Breast epithelium (tissue), 4 donors: ENCODE measurements at regions of chr1 and their contacts with region 1.

Region 1: DNA sequence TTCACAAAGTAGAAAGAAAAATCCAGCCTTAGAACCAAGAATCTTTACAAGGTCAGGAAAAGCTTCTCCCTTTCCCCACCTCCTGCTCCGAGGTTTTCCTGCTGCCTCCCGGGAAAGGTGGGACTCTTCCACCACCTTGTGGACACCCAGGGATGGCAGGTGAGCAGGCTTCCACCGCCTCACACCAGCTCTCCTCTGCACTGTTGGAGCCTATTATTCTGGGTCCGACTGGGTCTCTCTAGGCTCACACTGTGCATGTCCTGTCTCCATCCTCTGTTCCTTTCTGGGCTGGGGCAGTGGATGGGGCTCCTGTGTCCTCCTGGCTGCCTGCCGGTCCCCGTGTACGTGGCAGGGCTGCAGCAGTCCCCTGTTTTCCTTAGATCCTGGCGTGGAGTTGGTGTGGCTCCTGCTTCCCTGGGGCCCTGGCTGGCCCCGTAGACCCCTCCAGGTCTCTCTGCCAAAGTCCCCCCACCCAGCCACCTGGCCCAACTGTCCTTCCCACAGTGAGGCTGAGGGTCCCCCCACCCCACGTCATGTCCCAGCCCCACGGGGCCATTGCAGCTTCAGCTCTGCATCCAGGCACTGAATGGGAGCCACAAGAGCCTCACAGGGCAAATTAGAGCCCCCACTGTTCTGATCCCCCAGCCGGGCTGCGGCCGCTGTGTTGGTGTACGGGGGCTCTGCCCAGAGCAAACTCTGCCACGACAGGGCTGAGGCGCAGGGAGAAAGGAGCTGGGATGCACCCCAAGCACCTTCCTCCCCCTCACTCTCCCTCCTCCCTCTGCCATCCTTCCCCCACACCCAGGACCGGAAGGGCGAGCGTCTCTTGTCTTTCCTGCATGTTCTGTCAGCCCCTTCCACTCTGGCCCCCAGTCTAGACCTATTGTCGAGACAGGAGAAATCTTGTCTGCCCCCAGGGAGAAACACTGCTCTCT is 3.3 kb upstream of the SLC45A1 start:
- DNase-seq: peak; percentile 80 to 84
- H3K4me3 ChIP-seq: no peak overlapping the region
- H3K27ac ChIP-seq: no peak overlapping the region
- H3K4me1 ChIP-seq: peaks cover 3 to 4% of the 10 kb centered on the region in 2 donors
- H3K27me3 ChIP-seq: no peaks in the 10 kb centered on the region
- CTCF ChIP-seq: peak; percentile 87 to 98 (median 96)
- POLR2A ChIP-seq: no peak

Region 2: DNA sequence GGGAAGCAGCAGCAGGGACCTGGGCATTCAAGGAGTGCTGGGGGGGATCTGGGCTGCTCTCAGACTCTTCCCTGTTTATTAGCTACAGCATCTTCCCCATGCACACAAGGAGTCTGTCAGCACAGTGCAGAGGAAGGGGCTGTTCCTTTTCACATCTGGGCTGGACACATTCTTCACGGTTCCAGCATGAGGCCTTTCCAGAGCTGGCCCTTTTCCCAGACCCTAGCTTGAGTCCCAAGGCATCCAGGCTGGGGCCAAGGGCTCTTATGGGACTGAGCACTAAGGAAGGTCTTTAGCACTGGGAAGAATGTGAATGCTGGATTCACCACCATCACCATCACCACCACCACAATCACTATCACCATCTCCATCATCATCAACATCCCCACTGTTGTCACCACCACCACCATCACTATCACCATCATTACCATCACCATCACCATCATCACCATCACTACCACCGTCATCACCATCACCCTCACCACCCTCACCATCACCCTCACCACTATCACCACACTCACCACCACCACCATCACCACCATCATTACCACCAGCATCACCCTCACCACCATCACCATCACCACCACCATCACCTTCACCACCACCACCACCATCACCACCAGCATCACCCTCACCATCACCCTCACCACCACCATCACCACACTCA is 324.7 kb before region 1 on chr1:
- intact Hi-C with region 1: loop called (anchors 10 kb)
- DNase-seq: no peak
- H3K4me3 ChIP-seq: no peak overlapping the region
- H3K27ac ChIP-seq: peak overlapping the region in 1 of 2 donors; percentile 38
- H3K4me1 ChIP-seq: no peaks in the 10 kb centered on the region
- H3K27me3 ChIP-seq: no peaks in the 10 kb centered on the region
- CTCF ChIP-seq: no peak
- POLR2A ChIP-seq: no peak

Region 3: GRCh38 chr1:8015036-8015808 is 299.4 kb before region 1 on chr1:
- intact Hi-C with region 1: loop called (anchors 5 kb)
- DNase-seq: no peak
- H3K4me3 ChIP-seq: peak overlapping the region; percentile 8 to 32 (median 10)
- H3K27ac ChIP-seq: peak overlapping the region; percentile 27 to 97
- H3K4me1 ChIP-seq: peaks cover 0 to 7% of the 10 kb centered on the region in 2 donors
- H3K27me3 ChIP-seq: no peaks in the 10 kb centered on the region
- CTCF ChIP-seq: peak; percentile 83 to 85 (median 85)
- POLR2A ChIP-seq: no peak

Region 4: GRCh38 chr1:8283058-8283884 is 31.3 kb before region 1 on chr1:
- intact Hi-C with region 1: loop called (anchors 1 kb)
- DNase-seq: no peak
- H3K4me3 ChIP-seq: no peak overlapping the region
- H3K27ac ChIP-seq: no peak overlapping the region
- H3K4me1 ChIP-seq: no peaks in the 10 kb centered on the region
- H3K27me3 ChIP-seq: no peaks in the 10 kb centered on the region
- CTCF ChIP-seq: no peak
- POLR2A ChIP-seq: no peak